Upper lobe of right lung (tissue), 1 donor: ENCODE measurements at regions of chr7 and their contacts with region 1.

Region 1: GRCh38 chr7:99364961-99365817 is 9.3 kb upstream of the ARPC1B start:
- DNase-seq: peak; percentile 81
- ATAC-seq: peak; percentile 90
- H3K4me3 ChIP-seq: no peak overlapping the region
- H3K27ac ChIP-seq: no peak overlapping the region
- H3K4me1 ChIP-seq: peaks cover under 1% of the 10 kb centered on the region
- H3K27me3 ChIP-seq: no peaks in the 10 kb centered on the region
- CTCF ChIP-seq: peak; percentile 63

Region 2: GRCh38 chr7:99409806-99410205 is 44.6 kb after region 1 on chr7:
- intact Hi-C with region 1: loop called (anchors 10 kb)
- DNase-seq: no peak
- ATAC-seq: no peak
- H3K4me3 ChIP-seq: peak overlapping the region; percentile 100
- H3K27ac ChIP-seq: peak overlapping the region; percentile 99
- H3K4me1 ChIP-seq: peaks cover 36% of the 10 kb centered on the region
- H3K27me3 ChIP-seq: no peaks in the 10 kb centered on the region
- CTCF ChIP-seq: no peak